ENCODE measurements at regions of chr9 and their contacts with region 1.

Region 1: GRCh38 chr9:126704873-126705766 is 91.4 kb downstream of the LMX1B start:
- DNase-seq: peak; percentile 47 to 98
- H3K4me3 ChIP-seq: peak overlapping the region in 3 of 4 experiments; percentile 5 to 31 (median 19); a peak in 2 of 8 replicates
- H3K27ac ChIP-seq: no peak overlapping the region
- H3K4me1 ChIP-seq: peaks cover 0 to 11% (median 8%) of the 10 kb centered on the region in 4 experiments; a peak in 5 of 7 replicates
- H3K27me3 ChIP-seq: peaks cover 4 to 36% (median 30%) of the 10 kb centered on the region in 4 experiments
- CTCF ChIP-seq: peak in 2 of 3 experiments; percentile 93 to 94; a peak in 3 of 4 replicates
- EP300 ChIP-seq: no peak
- POLR2A ChIP-seq: no peak
- RAD21 ChIP-seq: peak; percentile 68 to 77

Region 2: DNA sequence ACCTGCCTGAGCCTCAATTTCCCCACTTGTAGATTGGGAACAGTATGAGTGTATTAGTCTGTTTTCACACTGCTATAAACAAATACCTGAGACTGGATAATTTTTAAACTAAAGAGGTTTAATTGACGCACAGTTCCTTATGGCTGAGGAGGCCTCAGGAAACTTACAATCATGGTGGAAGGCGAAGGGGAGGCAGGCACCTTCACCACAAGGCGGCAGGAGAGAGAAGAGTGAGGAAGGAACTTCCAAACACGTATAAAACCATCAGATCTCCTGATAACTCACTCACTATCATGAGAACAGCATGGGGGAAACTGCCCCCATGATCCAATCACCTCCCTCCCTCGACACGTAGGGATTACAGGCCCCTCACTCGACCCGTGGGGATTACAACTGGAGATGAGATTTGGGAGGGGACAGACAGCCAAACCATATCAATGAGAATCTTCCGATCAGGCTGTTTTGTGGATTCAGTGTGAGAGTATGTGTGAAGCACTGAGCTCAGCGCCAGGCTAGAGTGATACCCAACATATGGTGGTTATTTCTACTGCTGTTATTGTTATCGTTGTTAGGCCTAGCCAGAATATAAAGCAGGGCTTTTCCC is 106.0 kb before region 1 on chr9:
- CTCF ChIA-PET with region 1: interaction called, 28 read pairs
- POLR2A ChIA-PET with region 1: no interaction called
- DNase-seq: peak in 1 of 2 experiments; percentile 62
- H3K4me3 ChIP-seq: no peak overlapping the region
- H3K27ac ChIP-seq: no peak overlapping the region
- H3K4me1 ChIP-seq: no peaks in the 10 kb centered on the region
- H3K27me3 ChIP-seq: peaks cover 0 to 3% (median 1%) of the 10 kb centered on the region in 4 experiments; a peak in 3 of 7 replicates
- CTCF ChIP-seq: peak; percentile 50 to 70 (median 63)
- EP300 ChIP-seq: no peak
- POLR2A ChIP-seq: no peak
- RAD21 ChIP-seq: peak; percentile 27 to 46; a peak in 3 of 4 replicates

Region 3: DNA sequence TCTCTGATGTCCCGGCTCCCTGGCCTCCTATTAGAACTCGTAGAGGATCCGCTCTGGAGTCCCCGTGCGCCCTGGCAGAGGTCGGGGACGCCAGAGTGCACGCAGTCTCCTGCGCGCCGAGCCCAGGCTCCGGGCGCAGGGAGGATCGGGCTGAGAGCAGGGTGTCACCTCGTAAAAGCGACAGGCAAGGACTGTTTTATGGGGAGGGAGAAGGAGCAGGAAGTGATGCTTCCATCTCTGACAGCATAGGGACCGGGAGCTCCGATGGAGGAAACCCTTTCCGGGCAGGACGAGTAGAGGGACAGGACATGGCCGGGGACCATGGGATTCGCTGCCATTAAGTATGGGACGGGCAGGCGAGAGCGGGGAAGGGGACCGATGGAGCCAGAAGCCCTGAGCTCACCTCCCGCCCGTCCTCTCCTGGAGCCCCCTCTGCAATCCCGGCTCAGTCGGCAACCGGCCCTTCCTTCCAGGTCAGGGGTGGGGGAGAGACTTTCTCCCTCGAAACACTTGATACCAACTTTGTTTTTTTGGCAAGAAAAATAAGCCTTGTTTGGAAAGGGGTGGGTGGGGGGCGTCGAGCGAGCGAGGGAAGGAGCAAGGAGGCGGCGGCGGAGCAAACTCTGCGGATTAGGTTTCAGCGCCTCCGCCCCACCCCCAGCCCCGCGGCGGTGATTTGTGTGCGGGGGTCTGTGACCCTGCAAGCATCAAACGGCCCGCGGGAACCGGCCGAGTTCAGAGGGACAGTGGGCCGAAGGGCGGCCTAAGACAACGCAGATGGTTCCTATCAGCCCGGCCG is 78.8 kb before region 1 on chr9:
- CTCF ChIA-PET with region 1: interaction called, 38 read pairs
- POLR2A ChIA-PET with region 1: no interaction called
- DNase-seq: peak in 1 of 2 experiments; percentile 75
- H3K4me3 ChIP-seq: peak overlapping the region; percentile 2 to 56 (median 36); a peak in 6 of 8 replicates
- H3K27ac ChIP-seq: no peak overlapping the region
- H3K4me1 ChIP-seq: peaks cover 0 to 43% (median 33%) of the 10 kb centered on the region in 4 experiments; a peak in 6 of 7 replicates
- H3K27me3 ChIP-seq: peaks cover 80 to 100% (median 95%) of the 10 kb centered on the region in 4 experiments
- CTCF ChIP-seq: no peak
- EP300 ChIP-seq: no peak
- POLR2A ChIP-seq: no peak
- RAD21 ChIP-seq: no peak

Region 4: GRCh38 chr9:126682928-126683697 is 22.0 kb before region 1 on chr9:
- CTCF ChIA-PET with region 1: interaction called, 104 read pairs
- POLR2A ChIA-PET with region 1: interaction called, 3 read pairs
- DNase-seq: no peak
- H3K4me3 ChIP-seq: peak overlapping the region in 2 of 4 experiments; percentile 10 to 49; a peak in 3 of 8 replicates
- H3K27ac ChIP-seq: no peak overlapping the region
- H3K4me1 ChIP-seq: peaks cover 0 to 19% (median 6%) of the 10 kb centered on the region in 4 experiments; a peak in 6 of 7 replicates
- H3K27me3 ChIP-seq: peaks cover 14 to 64% (median 51%) of the 10 kb centered on the region in 4 experiments
- CTCF ChIP-seq: no peak
- EP300 ChIP-seq: no peak
- POLR2A ChIP-seq: no peak
- RAD21 ChIP-seq: no peak

Region 5: DNA sequence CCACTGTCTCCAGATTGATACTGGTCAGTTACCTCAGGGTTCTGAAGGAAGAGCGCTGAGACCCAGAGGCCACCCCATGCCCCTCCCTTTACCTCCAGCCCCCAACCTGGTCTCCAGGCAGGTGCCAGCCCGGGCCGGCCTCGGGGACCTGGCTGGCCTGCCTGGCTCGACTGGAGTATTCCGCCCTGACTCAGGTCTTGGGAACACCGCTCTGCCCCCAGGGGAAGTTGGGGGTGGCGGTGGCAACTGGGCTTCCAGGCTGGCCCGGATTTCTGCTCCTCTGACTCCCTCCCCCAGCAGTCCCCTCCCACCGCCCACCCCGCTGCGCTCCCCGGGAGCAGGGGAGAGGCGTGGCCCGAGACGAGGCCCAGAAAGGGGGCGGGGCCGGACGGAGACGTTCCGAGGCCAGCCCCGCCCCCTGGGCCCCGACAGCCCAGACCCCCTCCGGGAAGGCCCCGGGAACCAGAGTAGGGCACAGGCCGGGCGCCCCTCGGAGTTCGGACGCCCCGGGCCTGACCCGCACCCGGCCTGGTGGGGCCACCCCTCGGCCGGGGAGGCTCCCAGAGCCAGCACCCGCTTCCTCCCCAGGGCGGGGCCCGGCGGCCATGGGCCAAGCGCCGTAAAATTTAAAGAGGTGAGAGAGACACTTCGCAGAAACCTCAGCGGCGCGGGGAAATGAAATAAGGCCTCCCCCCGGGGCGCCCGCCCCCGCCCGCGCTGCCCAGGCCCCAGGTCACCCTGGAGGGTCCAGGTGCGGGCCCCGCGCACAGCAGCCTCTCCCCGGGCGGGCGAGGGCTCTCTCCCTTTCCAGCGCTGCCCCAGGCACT is 17.3 kb after region 1 on chr9:
- CTCF ChIA-PET with region 1: interaction called, 45 read pairs
- POLR2A ChIA-PET with region 1: no interaction called
- DNase-seq: peak; percentile 57 to 93
- H3K4me3 ChIP-seq: peak overlapping the region; percentile 49 to 92 (median 56)
- H3K27ac ChIP-seq: no peak overlapping the region
- H3K4me1 ChIP-seq: peaks cover 7 to 15% (median 12%) of the 10 kb centered on the region in 4 experiments
- H3K27me3 ChIP-seq: peaks cover 3 to 26% (median 20%) of the 10 kb centered on the region in 4 experiments
- CTCF ChIP-seq: no peak
- EP300 ChIP-seq: no peak
- POLR2A ChIP-seq: no peak
- RAD21 ChIP-seq: no peak

Region 6: DNA sequence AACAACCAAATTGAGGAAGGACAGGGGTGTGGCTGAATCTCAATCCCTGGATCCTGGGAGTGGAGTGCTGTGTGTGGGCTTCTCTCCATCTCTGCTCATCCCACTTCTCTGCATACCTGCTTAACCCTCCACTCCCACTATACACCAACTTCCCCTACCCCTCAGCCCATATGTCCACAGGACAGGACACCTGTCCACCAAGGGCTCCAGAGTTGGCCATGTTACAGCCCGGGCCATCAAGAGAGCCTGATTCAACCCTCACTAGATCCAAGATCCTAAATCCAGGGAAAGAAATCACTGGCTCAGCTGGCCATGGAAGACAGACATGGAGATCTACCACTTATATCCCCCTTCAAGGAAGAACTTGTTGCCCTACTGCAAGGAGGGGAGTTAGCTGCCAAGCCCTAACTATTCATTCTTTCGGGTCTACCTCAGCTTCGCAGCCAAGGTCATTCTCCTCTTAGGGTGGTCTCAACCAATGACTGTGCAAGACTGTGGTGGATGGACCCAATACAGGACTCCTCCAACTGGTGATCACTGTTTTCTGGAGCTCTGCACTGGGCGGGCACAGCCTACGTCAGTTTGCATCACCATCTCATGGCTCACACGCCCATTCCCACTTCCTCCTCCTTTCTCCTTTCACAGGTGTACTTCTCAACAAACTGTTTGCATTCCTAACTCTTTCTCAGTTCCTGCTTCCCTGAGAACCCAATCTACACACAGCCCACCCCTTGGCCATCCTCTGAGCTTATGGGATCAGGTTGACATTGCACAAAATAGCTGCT is 46.0 kb after region 1 on chr9:
- CTCF ChIA-PET with region 1: interaction called, 13 read pairs
- POLR2A ChIA-PET with region 1: interaction called, 3 read pairs
- DNase-seq: peak in 1 of 2 experiments; percentile 14
- H3K4me3 ChIP-seq: no peak overlapping the region
- H3K27ac ChIP-seq: no peak overlapping the region
- H3K4me1 ChIP-seq: no peaks in the 10 kb centered on the region
- H3K27me3 ChIP-seq: no peaks in the 10 kb centered on the region; a peak in 2 of 7 replicates
- CTCF ChIP-seq: no peak
- EP300 ChIP-seq: no peak
- POLR2A ChIP-seq: no peak
- RAD21 ChIP-seq: no peak

Region 7: DNA sequence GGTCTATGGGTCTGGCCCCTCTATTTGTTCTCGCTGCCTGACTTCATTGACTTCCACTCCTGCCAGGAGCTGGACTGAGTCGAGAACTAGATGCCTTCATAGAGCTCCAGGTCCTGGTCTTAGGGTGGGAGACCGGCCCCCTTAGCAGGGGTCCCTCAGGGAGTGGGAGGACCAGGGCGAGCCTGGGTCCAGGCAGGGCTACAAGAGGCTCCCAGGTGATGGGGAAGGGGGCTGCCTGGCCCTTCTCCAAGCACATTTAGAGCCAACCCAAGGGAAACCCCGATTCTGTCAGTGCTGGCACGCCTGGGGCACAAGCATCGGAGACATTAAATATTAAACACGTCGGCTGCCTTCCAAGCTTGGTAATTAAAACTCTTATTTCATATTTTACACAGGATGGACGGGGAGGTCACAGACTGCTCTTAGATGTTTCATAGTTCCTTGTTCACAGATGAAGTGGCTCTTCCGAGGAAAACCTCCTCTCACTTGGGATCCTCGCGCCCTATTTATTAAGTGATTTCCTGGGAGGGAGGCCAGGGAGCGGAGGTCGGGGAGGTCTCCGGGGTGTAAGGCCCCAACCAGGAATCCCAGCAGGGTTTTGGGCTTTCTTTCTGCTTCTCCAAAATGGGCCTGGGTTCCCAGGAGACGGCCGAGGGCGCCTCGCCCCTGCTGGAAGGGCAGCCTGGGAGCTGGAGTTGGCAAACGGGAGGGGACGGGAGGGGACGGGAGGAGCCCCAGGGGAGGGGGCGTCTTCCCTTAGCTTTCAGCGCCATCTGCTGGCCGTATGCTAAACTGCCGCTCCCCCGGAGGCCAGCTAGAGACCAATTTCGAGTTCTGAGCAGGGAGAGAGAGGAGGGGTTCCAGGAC is 76.3 kb after region 1 on chr9:
- CTCF ChIA-PET with region 1: interaction called, 415 read pairs
- POLR2A ChIA-PET with region 1: interaction called, 3 read pairs
- DNase-seq: peak; percentile 68 to 100
- H3K4me3 ChIP-seq: no peak overlapping the region
- H3K27ac ChIP-seq: no peak overlapping the region
- H3K4me1 ChIP-seq: peaks cover 0 to 2% (median under 1%) of the 10 kb centered on the region in 4 experiments; a peak in 1 of 7 replicates
- H3K27me3 ChIP-seq: peaks cover 0 to 5% (median 2%) of the 10 kb centered on the region in 4 experiments; a peak in 4 of 7 replicates
- CTCF ChIP-seq: peak; percentile 90 to 97 (median 91)
- EP300 ChIP-seq: no peak
- POLR2A ChIP-seq: no peak
- RAD21 ChIP-seq: peak; percentile 97 to 98

Measured in H1 (cell line).